Activated CD8-positive, alpha-beta memory T cell treated with anti-CD3 and anti-CD28 coated beads, Interleukin-2, amount 10 ng/mL, durations not matched to agents 7 days and 5 days (primary cell): ENCODE measurements at regions of chr12 and their contacts with region 1.

Region 1: DNA sequence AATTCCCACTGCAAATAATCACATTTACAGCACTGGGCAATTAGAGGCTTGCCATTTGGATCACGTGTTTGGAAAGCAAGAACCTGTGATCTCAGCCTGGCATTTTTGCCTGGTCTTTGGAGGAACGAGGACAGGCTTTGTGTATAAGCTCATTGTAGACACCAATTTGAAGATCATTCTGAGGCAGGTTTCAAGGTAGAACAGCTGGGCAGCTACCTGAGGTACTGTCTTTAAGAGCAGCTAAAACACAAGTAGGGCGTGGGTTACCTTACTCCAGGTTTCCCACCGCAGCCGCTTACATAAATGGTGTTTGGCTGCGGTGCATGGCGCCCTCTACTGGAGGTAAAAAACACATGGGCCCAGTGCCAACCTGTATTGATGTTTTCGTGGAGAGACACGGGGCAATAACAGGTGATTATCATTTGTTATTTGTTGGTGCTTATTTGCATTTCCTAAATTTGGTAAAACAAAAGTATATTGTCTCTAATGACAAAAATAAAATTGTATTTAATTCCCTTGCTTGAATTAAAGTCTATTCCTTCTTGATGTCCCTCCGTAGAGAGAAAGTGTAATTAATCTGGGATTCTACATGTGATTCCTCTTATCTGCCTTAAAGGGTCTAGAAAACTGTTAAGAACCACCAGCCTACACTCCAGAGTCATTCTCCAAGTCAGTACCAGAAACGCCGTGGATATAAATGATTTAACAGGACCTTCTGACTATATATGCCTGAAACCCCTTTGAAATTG is 69.7 kb downstream of the SVOP start:
- DNase-seq: peak; percentile 79
- ATAC-seq: peak; percentile 93
- H3K4me3 Mint-ChIP-seq: no peak overlapping the region
- H3K27ac Mint-ChIP-seq: no peak overlapping the region
- H3K4me1 Mint-ChIP-seq: peaks cover 11% of the 10 kb centered on the region
- H3K27me3 Mint-ChIP-seq: peaks cover 17% of the 10 kb centered on the region

Region 2: GRCh38 chr12:108884116-108885012 is 66.8 kb before region 1 on chr12:
- CTCF ChIA-PET with region 1: interaction called, 20 read pairs
- DNase-seq: peak; percentile 80
- ATAC-seq: peak; percentile 75
- H3K4me3 Mint-ChIP-seq: no peak overlapping the region
- H3K27ac Mint-ChIP-seq: no peak overlapping the region
- H3K4me1 Mint-ChIP-seq: peaks cover 5% of the 10 kb centered on the region
- H3K27me3 Mint-ChIP-seq: peaks cover 6% of the 10 kb centered on the region